Transverse colon (tissue), 4 donors: ENCODE measurements at regions of chr17 and their contacts with region 1.

Region 1: DNA sequence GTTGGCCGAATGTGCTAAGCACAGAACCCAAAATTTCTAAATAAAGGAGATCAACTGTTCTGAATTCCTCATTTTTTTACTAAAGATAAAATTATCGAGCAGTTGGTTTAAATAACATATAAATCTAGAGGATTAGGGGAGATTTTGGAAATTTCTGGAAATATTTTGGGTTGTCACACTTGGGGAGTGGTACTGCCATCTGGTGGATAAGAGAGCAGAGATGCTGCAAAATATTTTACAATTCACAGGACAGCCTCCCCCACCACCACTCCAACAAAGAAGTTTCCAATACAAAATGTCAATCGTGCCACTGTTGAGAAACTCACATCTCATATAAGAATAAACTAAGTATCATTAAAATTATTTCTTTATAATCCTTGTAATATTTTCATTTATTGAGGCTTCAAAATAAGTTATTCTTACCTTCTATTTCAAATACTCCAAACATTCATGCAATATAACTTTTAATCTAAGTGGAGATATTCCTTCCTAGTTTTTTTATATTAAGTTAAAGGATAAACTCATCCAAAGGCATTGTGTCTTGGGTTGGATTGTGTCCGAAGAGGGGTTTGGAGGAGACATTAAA is 17.0 kb upstream of the ABCA8 start:
- DNase-seq: no peak
- H3K4me3 ChIP-seq: no peak overlapping the region
- H3K27ac ChIP-seq: no peak overlapping the region
- H3K4me1 ChIP-seq: no peaks in the 10 kb centered on the region
- H3K27me3 ChIP-seq: no peaks in the 10 kb centered on the region
- CTCF ChIP-seq: peak in 4 of 5 experiments; percentile 22 to 48 (median 39)
- EP300 ChIP-seq: no peak
- POLR2A ChIP-seq: no peak

Region 2: GRCh38 chr17:68771867-68772515 is 200.2 kb before region 1 on chr17:
- in situ Hi-C with region 1: loop called in 2 of 4 experiments (anchors 10 kb)
- intact Hi-C with region 1: no loop called
- DNase-seq: no peak
- H3K4me3 ChIP-seq: no peak overlapping the region
- H3K27ac ChIP-seq: peak overlapping the region in 3 of 4 donors; percentile 9 to 36 (median 29)
- H3K4me1 ChIP-seq: peaks cover 0 to 13% (median 4%) of the 10 kb centered on the region in 4 donors
- H3K27me3 ChIP-seq: no peaks in the 10 kb centered on the region
- CTCF ChIP-seq: peak; percentile 47 to 61 (median 56)
- EP300 ChIP-seq: no peak
- POLR2A ChIP-seq: no peak

Region 3: GRCh38 chr17:68782789-68783188 is 189.4 kb before region 1 on chr17:
- in situ Hi-C with region 1: loop called in 3 of 4 experiments (anchors 10 kb)
- intact Hi-C with region 1: no loop called
- DNase-seq: no peak
- H3K4me3 ChIP-seq: no peak overlapping the region
- H3K27ac ChIP-seq: no peak overlapping the region
- H3K4me1 ChIP-seq: peaks cover 0 to 8% (median 6%) of the 10 kb centered on the region in 4 donors
- H3K27me3 ChIP-seq: no peaks in the 10 kb centered on the region
- CTCF ChIP-seq: no peak
- EP300 ChIP-seq: no peak
- POLR2A ChIP-seq: no peak

Region 4: GRCh38 chr17:68849673-68850610 is 122.3 kb before region 1 on chr17:
- in situ Hi-C with region 1: no loop called
- intact Hi-C with region 1: no loop called
- DNase-seq: no peak
- H3K4me3 ChIP-seq: no peak overlapping the region
- H3K27ac ChIP-seq: no peak overlapping the region
- H3K4me1 ChIP-seq: no peaks in the 10 kb centered on the region
- H3K27me3 ChIP-seq: no peaks in the 10 kb centered on the region
- CTCF ChIP-seq: no peak
- EP300 ChIP-seq: no peak
- POLR2A ChIP-seq: no peak

Region 5: GRCh38 chr17:68909066-68909465 is 63.1 kb before region 1 on chr17:
- in situ Hi-C with region 1: loop called in 1 of 4 experiments (anchors 10 kb)
- intact Hi-C with region 1: no loop called
- DNase-seq: peak; percentile 20
- H3K4me3 ChIP-seq: no peak overlapping the region
- H3K27ac ChIP-seq: peak overlapping the region; percentile 45 to 67 (median 61)
- H3K4me1 ChIP-seq: peaks cover 0 to 17% (median 7%) of the 10 kb centered on the region in 4 donors
- H3K27me3 ChIP-seq: no peaks in the 10 kb centered on the region
- CTCF ChIP-seq: no peak
- EP300 ChIP-seq: no peak
- POLR2A ChIP-seq: no peak

Region 6: GRCh38 chr17:69030145-69030544 is 57.9 kb after region 1 on chr17:
- in situ Hi-C with region 1: no loop called
- intact Hi-C with region 1: no loop called
- DNase-seq: no peak
- H3K4me3 ChIP-seq: no peak overlapping the region
- H3K27ac ChIP-seq: no peak overlapping the region
- H3K4me1 ChIP-seq: no peaks in the 10 kb centered on the region
- H3K27me3 ChIP-seq: no peaks in the 10 kb centered on the region
- CTCF ChIP-seq: no peak
- EP300 ChIP-seq: no peak
- POLR2A ChIP-seq: no peak